PC-9 (cell line): ENCODE measurements at regions of chr5 and their contacts with region 1.

Region 1: DNA sequence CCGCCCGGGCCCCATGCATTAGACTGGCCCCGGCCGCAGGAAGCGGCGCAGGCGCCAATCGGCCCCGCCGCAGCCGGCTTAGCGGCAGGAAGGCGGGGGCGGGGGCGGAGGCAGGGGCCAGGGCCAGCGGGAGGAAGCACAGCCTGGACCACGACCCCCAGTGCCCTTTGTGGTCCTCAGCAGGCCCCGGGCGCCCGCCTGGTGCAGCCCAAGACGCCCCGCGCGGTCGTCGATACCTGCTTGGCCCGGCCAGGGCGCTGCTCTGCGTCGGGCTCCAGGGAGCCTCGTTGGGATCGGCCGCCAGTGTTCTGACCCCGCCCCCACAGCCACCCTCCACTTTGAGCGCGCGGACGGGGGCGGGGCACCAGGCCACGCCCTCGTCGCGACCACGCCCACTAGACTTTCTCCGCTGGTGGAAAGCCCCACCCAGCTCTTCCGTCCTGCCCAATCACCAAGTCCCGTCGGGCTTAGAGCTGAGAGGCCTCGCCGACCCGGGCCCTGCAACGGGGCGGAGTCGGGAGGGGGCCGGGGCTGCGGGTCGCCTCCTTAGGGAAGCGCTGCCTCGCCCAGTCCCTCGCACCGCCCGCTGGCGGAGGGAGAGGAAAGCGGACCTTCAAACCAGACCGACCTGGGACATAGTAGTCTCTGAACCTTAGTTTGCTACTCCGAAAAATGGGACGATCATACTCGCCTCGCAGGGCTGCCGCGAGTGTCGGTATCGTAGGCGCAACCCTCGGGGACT is at the start of gene PDLIM7:
- DNase-seq: peak; percentile 88 to 99
- H3K4me3 ChIP-seq: peak within 1 kb of the TSS; percentile 85
- H3K27ac ChIP-seq: peak within 1 kb of the TSS; percentile 65
- H3K4me1 ChIP-seq: peaks cover 41% of the 10 kb centered on the region
- H3K27me3 ChIP-seq: no peaks in the 10 kb centered on the region
- CTCF ChIP-seq: no peak
- total RNA-seq, gene PDLIM7: 167 and 202 TPM in 2 replicates

Region 2: GRCh38 chr5:177086924-177087706 is 410.3 kb before region 1 on chr5:
- CTCF ChIA-PET with region 1: interaction called, 10 read pairs
- POLR2A ChIA-PET with region 1: no interaction called
- intact Hi-C with region 1: no loop called
- DNase-seq: peak in 1 of 2 experiments; percentile 77
- H3K4me3 ChIP-seq: peak overlapping the region; percentile 65
- H3K27ac ChIP-seq: no peak overlapping the region
- H3K4me1 ChIP-seq: no peaks in the 10 kb centered on the region
- H3K27me3 ChIP-seq: 0 out of 2 replicates have a peak, but pooled peaks cover 5% of the 10 kb centered on the region
- CTCF ChIP-seq: peak; percentile 62

Region 3: DNA sequence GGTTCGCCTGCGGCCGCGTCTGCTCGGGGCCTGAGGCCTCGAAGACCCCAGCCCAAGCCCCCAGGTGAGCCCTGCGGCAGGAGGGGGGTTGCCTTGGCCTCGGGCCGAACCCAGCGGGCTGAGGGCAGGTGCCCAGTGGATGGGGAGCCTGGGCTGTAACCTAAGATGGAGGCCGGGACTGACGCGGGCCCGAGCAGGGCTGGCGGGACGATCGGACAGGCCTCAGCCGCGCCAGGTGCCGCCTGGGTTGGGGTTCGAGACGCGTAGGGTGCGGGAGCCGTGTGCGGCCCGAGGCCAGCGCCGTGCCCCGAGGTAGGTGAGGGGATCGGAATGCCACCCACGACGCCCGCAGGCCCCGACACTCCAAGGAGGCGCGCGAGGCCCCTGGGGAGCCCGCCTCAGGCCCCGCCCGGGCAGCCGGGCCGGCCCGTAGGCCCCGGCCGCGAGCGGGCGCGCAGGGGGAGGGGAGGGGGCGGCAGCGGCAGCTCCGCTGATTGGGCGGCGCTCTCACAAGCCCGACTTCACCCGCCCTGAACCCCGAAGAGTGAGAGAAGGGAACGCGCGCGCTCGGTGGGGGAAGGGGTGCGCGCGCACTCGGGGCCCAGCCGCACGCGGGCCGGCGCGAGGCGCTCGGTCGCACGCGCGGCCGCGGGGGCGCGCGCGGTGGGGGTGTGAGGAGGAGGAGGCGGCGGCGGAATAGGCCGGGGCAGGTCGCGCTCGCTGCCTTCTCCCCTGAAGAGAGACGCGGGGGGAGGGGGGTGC is 364.2 kb before region 1 on chr5 and contains the start of gene NSD1:
- CTCF ChIA-PET with region 1: no interaction called
- POLR2A ChIA-PET with region 1: no interaction called
- intact Hi-C with region 1: loop called (anchors 5 kb)
- DNase-seq: peak in 1 of 2 experiments; percentile 75
- H3K4me3 ChIP-seq: peak within 1 kb of the TSS; percentile 78
- H3K27ac ChIP-seq: no peak within 1 kb of the TSS
- H3K4me1 ChIP-seq: peaks cover 16% of the 10 kb centered on the region
- H3K27me3 ChIP-seq: no peaks in the 10 kb centered on the region
- CTCF ChIP-seq: no peak
- total RNA-seq, gene NSD1: 60.9 and 62.2 TPM in 2 replicates

Region 4: GRCh38 chr5:177317959-177318377 is 179.5 kb before region 1 on chr5:
- CTCF ChIA-PET with region 1: no interaction called
- POLR2A ChIA-PET with region 1: interaction called, 9 read pairs
- intact Hi-C with region 1: loop called (anchors 2 kb)
- DNase-seq: peak; percentile 67 to 72
- H3K4me3 ChIP-seq: no peak overlapping the region
- H3K27ac ChIP-seq: no peak overlapping the region
- H3K4me1 ChIP-seq: peaks cover 4% of the 10 kb centered on the region; the same call in 1 of the 2 replicates
- H3K27me3 ChIP-seq: no peaks in the 10 kb centered on the region
- CTCF ChIP-seq: peak; percentile 92

Region 5: DNA sequence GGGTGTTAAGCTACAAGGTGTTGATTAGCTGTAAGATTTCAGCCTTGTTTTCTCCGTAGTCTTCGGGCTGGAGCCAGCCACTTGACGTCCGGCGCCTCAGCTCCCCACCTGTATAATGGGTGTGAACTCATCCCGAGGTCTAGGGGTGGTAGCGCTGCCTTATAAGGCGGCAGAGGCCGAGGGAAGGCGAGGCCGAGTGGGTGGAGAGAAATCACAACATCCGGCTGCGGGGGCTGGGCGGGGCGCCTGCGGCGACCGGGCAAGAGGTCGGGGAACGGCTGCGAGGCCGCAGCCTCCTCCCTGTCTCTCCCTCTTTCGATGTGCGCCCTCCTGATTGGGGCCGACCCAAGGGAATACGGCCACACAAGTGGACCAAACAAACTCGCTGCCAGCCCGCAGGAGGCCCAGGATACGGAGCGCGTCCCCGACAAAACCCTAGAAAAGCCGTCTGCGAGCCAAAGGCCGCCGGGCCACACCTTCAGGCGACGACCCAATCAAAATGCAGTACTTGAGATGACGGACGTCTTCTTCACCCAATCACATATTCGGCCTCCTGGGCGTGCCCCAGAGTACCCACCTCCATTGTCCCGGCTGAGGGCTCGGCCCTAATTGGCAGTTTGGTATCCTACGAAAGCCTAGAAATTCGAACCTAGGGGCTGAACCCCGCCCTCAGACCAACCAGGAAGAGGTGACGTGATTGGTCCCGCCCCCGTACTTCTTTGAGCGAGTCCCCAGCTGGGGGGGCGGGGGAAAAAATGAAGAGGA is 71.5 kb before region 1 on chr5:
- CTCF ChIA-PET with region 1: interaction called, 5 read pairs
- POLR2A ChIA-PET with region 1: interaction called, 10 read pairs
- intact Hi-C with region 1: no loop called
- DNase-seq: peak; percentile 99 to 100
- H3K4me3 ChIP-seq: peak overlapping the region; percentile 64
- H3K27ac ChIP-seq: peak overlapping the region; percentile 81
- H3K4me1 ChIP-seq: peaks cover 23% of the 10 kb centered on the region
- H3K27me3 ChIP-seq: no peaks in the 10 kb centered on the region
- CTCF ChIP-seq: no peak

Region 6: GRCh38 chr5:177440211-177440971 is 57.1 kb before region 1 on chr5:
- CTCF ChIA-PET with region 1: no interaction called
- POLR2A ChIA-PET with region 1: no interaction called
- intact Hi-C with region 1: no loop called
- DNase-seq: peak in 1 of 2 experiments; percentile 30
- H3K4me3 ChIP-seq: no peak overlapping the region
- H3K27ac ChIP-seq: no peak overlapping the region
- H3K4me1 ChIP-seq: no peaks in the 10 kb centered on the region
- H3K27me3 ChIP-seq: no peaks in the 10 kb centered on the region
- CTCF ChIP-seq: no peak

Region 7: DNA sequence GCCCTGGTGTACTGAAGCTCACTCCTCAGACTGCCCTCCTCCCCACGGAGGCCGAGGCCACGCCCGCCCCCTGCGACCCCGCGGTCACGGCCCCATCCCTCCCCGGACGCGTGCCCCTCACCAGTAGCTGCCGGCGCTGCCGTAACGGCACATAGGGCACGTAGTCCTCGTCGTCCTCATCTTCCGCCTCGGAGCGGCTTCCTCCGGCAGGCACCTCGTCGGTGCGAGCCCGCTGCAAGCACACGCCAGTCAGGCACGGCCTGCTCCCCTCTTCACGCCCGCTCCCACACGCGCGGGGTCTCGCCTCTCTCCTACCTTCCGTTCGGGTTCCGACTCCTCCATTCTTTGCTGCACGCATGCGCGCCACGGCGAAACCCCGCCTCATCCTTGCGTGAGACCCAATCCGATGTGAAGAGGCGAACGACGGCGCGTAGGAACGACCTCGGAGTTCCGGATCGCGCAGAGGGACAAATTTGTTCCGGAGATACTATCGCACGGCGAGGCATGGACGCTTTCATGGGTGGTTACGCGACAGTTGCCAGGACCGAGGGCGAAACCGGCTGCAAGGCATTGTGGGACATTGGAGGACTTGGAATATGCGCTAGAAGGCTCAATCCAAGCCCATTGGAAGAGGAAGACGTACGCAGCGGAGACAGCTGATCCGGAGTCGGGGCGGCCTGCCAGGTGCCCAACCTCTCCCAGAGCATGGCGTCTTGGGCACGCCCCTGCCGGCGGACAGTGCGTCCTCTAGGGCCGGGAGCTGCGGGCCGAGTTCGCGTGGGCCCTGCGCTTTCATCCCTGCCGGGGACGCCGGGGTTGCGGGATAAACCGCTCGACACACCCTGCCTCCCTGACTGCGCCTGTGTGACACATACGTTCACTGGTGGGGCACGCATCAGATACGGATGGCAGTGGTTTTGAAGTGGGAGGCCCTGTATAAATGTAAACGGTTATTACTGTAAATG is 19.4 kb after region 1 on chr5 and contains the start of gene DDX41:
- CTCF ChIA-PET with region 1: no interaction called
- POLR2A ChIA-PET with region 1: interaction called, 6 read pairs
- intact Hi-C with region 1: loop called (anchors 1 kb)
- DNase-seq: peak; percentile 96 to 98
- H3K4me3 ChIP-seq: peak within 1 kb of the TSS; percentile 93
- H3K27ac ChIP-seq: peak within 1 kb of the TSS; percentile 18
- H3K4me1 ChIP-seq: peaks cover 18% of the 10 kb centered on the region
- H3K27me3 ChIP-seq: no peaks in the 10 kb centered on the region
- CTCF ChIP-seq: no peak
- total RNA-seq, gene DDX41: 90.8 and 93.1 TPM in 2 replicates

Region 8: GRCh38 chr5:177980743-177981151 is 483.3 kb after region 1 on chr5:
- CTCF ChIA-PET with region 1: no interaction called
- POLR2A ChIA-PET with region 1: no interaction called
- intact Hi-C with region 1: no loop called
- DNase-seq: no peak
- H3K4me3 ChIP-seq: no peak overlapping the region
- H3K27ac ChIP-seq: no peak overlapping the region
- H3K4me1 ChIP-seq: no peaks in the 10 kb centered on the region
- H3K27me3 ChIP-seq: peaks cover 62% of the 10 kb centered on the region
- CTCF ChIP-seq: no peak